OCI-LY7 (cell line): ENCODE measurements at regions of chr7 and their contacts with region 1.

Region 1: GRCh38 chr7:74183613-74184450 is 9.7 kb downstream of the EIF4H start:
- DNase-seq: peak; percentile 48
- H3K4me3 ChIP-seq: no peak overlapping the region
- H3K27ac ChIP-seq: peak overlapping the region; percentile 38
- H3K4me1 ChIP-seq: peaks cover 61% of the 10 kb centered on the region
- CTCF ChIP-seq: peak; percentile 86

Region 2: DNA sequence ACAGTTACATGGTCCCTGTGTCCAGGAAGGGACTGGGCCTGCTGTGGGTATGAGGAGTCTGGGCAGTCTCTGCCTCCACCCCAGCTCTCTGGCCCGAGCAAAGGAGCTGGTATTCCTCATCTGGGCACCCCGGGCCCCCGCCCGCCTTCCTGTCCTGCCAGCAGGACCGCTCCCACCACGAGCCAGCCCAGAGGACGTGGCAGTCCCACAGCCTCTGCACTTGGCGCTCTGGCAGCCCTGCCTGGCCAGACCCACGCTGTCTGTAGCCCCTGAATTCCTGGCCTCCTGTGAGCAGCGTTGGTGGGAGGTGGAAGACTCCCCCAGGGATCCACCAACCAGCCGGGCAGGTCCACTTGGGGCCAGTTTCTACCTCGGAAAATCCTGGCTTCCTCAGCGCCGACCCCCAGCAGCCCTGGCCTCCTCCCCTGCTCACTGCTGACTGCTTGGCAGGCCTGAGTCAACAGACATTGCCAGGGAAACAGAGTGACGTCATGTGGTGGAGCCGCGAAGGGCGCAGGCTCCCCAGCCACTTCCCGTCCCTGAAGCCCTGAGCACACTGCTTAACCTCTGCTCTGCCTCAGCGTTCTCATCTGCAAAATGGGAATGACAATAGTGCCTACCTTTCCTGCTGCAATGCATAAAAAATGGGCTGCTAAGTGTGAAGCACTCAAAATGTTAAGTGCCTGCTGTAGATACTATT is 121.8 kb before region 1 on chr7:
- CTCF ChIA-PET with region 1: interaction called, 10 read pairs
- POLR2A ChIA-PET with region 1: no interaction called
- intact Hi-C with region 1: loop called (anchors 1 kb)
- DNase-seq: peak; percentile 42
- H3K4me3 ChIP-seq: no peak overlapping the region
- H3K27ac ChIP-seq: no peak overlapping the region
- H3K4me1 ChIP-seq: peaks cover 6% of the 10 kb centered on the region
- CTCF ChIP-seq: no peak

Region 3: DNA sequence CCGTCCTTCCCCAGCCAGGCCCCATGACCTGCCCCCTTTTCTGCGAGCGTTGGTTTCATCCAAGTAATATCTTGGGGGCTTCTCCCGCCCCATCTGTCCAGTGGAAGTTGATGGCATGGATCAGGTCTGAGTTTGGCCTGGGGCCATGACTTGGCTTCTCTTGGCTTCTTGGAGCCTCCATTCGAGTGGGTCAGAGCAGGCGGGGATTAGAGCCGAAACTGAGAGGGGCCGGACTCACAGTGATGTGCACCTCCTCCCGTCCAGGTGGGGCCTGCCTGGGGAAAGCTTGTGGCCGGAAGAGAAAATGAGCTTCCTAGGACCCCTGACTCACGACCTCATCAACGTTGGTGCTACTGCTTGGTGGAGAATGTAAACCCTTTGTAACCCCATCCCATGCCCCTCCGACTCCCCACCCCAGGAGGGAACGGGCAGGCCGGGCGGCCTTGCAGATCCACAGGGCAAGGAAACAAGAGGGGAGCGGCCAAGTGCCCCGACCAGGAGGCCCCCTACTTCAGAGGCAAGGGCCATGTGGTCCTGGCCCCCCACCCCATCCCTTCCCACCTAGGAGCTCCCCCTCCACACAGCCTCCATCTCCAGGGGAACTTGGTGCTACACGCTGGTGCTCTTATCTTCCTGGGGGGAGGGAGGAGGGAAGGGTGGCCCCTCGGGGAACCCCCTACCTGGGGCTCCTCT is 115.3 kb before region 1 on chr7:
- CTCF ChIA-PET with region 1: interaction called, 10 read pairs
- POLR2A ChIA-PET with region 1: interaction called, 5 read pairs
- intact Hi-C with region 1: loop called (anchors 1 kb)
- DNase-seq: no peak
- H3K4me3 ChIP-seq: no peak overlapping the region
- H3K27ac ChIP-seq: no peak overlapping the region
- H3K4me1 ChIP-seq: peaks cover 12% of the 10 kb centered on the region
- CTCF ChIP-seq: no peak

Region 4: GRCh38 chr7:74083117-74083876 is 100.5 kb before region 1 on chr7 and contains the start of gene LIMK1:
- CTCF ChIA-PET with region 1: no interaction called
- POLR2A ChIA-PET with region 1: interaction called, 4 read pairs
- intact Hi-C with region 1: loop called (anchors 5 kb)
- DNase-seq: peak; percentile 88
- H3K4me3 ChIP-seq: peak within 1 kb of the TSS; percentile 83
- H3K27ac ChIP-seq: peak within 1 kb of the TSS; percentile 31
- H3K4me1 ChIP-seq: peaks cover 30% of the 10 kb centered on the region
- CTCF ChIP-seq: no peak
- total RNA-seq, gene LIMK1: 21.9 and 31.7 TPM in 2 replicates

Region 5: DNA sequence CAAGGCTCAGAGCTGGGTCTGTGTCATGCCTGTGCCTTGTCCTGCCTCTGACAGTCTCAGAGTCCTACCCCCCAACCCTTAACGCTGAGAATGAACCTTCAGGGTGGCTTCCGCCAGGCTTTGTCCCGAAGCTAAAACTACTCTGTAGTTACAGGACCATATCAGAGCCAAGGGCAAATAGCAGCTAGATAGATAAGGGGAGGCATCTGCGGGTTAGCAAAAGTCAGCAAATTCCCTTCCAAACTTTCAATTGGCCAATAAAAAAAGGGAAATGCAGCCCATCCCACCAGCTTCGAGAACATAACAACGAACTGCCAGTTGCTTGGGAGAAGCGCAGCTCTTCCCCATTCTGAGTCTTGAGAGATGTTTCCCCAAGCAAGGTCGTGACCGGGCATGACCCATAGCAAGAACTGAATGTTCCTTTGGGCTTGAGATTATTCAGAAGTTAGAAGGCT is 1612.0 kb after region 1 on chr7:
- CTCF ChIA-PET with region 1: no interaction called
- POLR2A ChIA-PET with region 1: no interaction called
- intact Hi-C with region 1: no loop called
- DNase-seq: no peak
- H3K4me3 ChIP-seq: no peak overlapping the region
- H3K27ac ChIP-seq: no peak overlapping the region
- H3K4me1 ChIP-seq: peaks cover 8% of the 10 kb centered on the region
- CTCF ChIP-seq: no peak